Gastrocnemius medialis (tissue), 4 donors: ENCODE measurements at regions of chr3 and their contacts with region 1.

Region 1: GRCh38 chr3:11637901-11638458 is 5.7 kb downstream of the VGLL4 start:
- DNase-seq: no peak
- ATAC-seq: no peak
- H3K4me3 ChIP-seq: peak overlapping the region; percentile 26 to 43 (median 38)
- H3K27ac ChIP-seq: peak overlapping the region; percentile 90 to 95 (median 92)
- H3K4me1 ChIP-seq: peaks cover 76 to 82% of the 10 kb centered on the region in 2 donors
- H3K27me3 ChIP-seq: no peaks in the 10 kb centered on the region
- CTCF ChIP-seq: no peak
- POLR2A ChIP-seq: no peak

Region 2: DNA sequence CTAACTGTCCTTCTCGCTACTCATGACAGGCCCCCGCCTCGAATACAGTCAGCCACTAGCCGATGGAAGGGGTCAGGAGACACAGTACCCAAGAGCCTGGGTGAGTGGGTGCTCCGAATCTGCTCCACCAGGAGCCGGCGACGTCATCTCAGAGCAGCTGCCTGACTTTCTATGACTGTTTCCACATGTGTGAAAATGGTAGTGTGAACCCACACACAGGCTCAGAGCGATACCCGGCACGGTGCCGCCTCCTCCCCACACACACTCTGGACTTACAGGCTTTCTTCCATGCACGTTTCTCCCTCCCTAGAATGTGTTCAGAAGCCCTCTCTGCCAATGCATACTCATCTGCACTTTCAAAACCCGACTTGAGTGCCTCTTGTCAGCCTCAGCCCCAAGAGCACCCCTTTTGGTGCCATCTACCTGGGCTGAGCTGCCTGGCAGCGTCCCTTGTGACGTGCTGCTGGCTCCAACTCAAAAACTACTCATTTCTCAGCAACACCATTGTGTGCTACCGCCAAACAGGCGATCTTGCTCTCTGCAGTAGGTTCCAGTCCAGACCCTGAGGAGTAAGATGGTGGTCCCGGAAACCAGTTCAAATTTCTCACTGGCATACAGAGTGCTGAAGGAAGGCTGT is 24.0 kb before region 1 on chr3:
- in situ Hi-C with region 1: no loop called
- intact Hi-C with region 1: loop called (anchors 2 kb)
- DNase-seq: no peak
- ATAC-seq: peak in 1 of 2 donors; percentile 21
- H3K4me3 ChIP-seq: no peak overlapping the region
- H3K27ac ChIP-seq: peak overlapping the region; percentile 10 to 60 (median 50)
- H3K4me1 ChIP-seq: peaks cover 74 to 89% of the 10 kb centered on the region in 2 donors
- H3K27me3 ChIP-seq: no peaks in the 10 kb centered on the region
- CTCF ChIP-seq: no peak
- POLR2A ChIP-seq: no peak

Region 3: GRCh38 chr3:12120374-12121140 is 482.6 kb after region 1 on chr3:
- in situ Hi-C with region 1: no loop called
- intact Hi-C with region 1: no loop called
- DNase-seq: no peak
- ATAC-seq: peak in 1 of 2 donors; percentile 30
- H3K4me3 ChIP-seq: no peak overlapping the region
- H3K27ac ChIP-seq: no peak overlapping the region
- H3K4me1 ChIP-seq: no peaks in the 10 kb centered on the region
- H3K27me3 ChIP-seq: peaks cover 0 to 3% (median 0%) of the 10 kb centered on the region in 3 donors
- CTCF ChIP-seq: no peak
- POLR2A ChIP-seq: no peak